Right ventricle myocardium inferior (tissue), 1 donor: ENCODE measurements at regions of chr4 and their contacts with region 1.

Region 1: GRCh38 chr4:74623041-74623440 is 171.3 kb downstream of the BTC start:
- DNase-seq: no peak
- ATAC-seq: no peak

Region 2: GRCh38 chr4:73976716-73977115 is 646.3 kb before region 1 on chr4:
- intact Hi-C with region 1: no loop called
- DNase-seq: no peak
- ATAC-seq: no peak

Region 3: GRCh38 chr4:74543231-74543670 is 79.8 kb before region 1 on chr4:
- intact Hi-C with region 1: loop called (anchors 5 kb)
- DNase-seq: no peak
- ATAC-seq: no peak